Mammary epithelial cell (primary cell): ENCODE measurements at regions of chr10 and their contacts with region 1.

Region 1: GRCh38 chr10:125283191-125283835 is 123.0 kb upstream of the CTBP2 start:
- DNase-seq: no peak
- H3K4me3 ChIP-seq: no peak overlapping the region
- H3K27ac ChIP-seq: no peak overlapping the region
- H3K4me1 ChIP-seq: peaks cover 15% of the 10 kb centered on the region
- H3K27me3 ChIP-seq: no peaks in the 10 kb centered on the region
- CTCF ChIP-seq: no peak

Region 2: DNA sequence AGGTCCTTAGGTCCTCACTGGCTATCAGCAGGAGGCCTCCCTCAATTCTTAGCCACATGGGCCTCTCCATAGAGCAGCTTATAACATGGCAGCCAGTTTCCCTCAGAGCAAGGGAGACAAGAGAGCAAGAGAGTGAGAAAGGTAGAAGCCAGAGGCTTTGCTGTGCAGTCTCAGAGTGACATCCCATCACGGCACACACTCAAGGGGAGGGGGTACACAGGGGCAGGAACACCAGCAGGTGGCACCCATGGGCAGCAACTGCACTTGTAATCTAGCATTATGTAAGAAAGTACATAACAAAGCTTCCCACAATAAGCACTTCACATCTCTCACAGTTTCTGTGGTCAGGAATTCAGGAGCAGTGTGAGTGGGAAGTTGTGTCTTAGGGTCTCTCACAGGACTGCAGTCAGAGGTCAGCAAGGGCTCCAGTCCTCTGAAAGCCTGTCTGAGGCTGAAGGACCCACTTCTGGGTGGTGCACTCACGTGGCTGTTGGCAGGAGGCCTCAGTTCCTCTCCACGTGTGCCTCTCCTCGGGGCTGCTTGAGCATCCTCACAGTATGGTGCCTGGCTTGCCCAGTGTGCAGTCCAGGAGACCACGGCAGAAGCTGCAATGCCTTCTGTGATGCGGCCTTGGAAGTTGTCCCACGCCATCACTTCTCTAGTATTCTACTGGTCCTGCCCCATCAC is 1024.0 kb before region 1 on chr10:
- CTCF ChIA-PET with region 1: no interaction called
- dilution Hi-C with region 1: no loop called
- in situ Hi-C with region 1: no loop called
- intact Hi-C with region 1: no loop called
- DNase-seq: no peak
- H3K4me3 ChIP-seq: no peak overlapping the region
- H3K27ac ChIP-seq: no peak overlapping the region
- H3K4me1 ChIP-seq: no peaks in the 10 kb centered on the region
- H3K27me3 ChIP-seq: peaks cover 3% of the 10 kb centered on the region
- CTCF ChIP-seq: peak; percentile 4 to 33

Region 3: GRCh38 chr10:125238682-125239081 is 44.6 kb before region 1 on chr10:
- CTCF ChIA-PET with region 1: no interaction called
- dilution Hi-C with region 1: loop called (anchors 5 kb)
- in situ Hi-C with region 1: no loop called
- intact Hi-C with region 1: no loop called
- DNase-seq: no peak
- H3K4me3 ChIP-seq: no peak overlapping the region
- H3K27ac ChIP-seq: no peak overlapping the region
- H3K4me1 ChIP-seq: peaks cover 15% of the 10 kb centered on the region
- H3K27me3 ChIP-seq: no peaks in the 10 kb centered on the region
- CTCF ChIP-seq: peak in 1 of 2 donors; percentile 16

Region 4: DNA sequence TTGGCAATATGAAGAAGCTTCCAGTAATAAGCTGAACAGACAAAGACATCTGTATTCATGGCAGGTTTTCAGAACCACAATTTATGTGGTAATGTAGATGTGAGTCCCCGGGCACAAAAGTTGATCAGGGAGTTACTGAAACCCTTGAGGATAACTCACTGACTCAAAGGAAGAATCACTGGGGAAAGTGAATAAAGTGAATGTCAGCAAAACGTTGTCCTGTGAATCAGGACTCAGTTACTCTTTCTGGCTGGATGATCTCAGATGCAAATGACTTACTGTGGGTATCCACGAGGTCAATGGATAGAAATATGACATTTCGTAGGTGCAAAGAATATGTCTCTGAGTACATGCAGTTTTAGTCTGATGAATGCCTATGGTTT is 49.9 kb after region 1 on chr10:
- CTCF ChIA-PET with region 1: no interaction called
- dilution Hi-C with region 1: loop called (anchors 5 kb)
- in situ Hi-C with region 1: no loop called
- intact Hi-C with region 1: no loop called
- DNase-seq: peak; percentile 19
- H3K4me3 ChIP-seq: no peak overlapping the region
- H3K27ac ChIP-seq: no peak overlapping the region
- H3K4me1 ChIP-seq: no peaks in the 10 kb centered on the region
- H3K27me3 ChIP-seq: no peaks in the 10 kb centered on the region
- CTCF ChIP-seq: no peak